ENCODE measurements at regions of chr11 and their contacts with region 1.

Region 1: GRCh38 chr11:62860835-62861563 is 19.7 kb upstream of the SLC3A2 start:
- DNase-seq: no peak
- ATAC-seq: no peak
- H3K4me3 ChIP-seq: peak overlapping the region; percentile 30; the same call in 1 of the 2 replicates
- H3K27ac ChIP-seq: peak overlapping the region; percentile 63; the same call in 2 of the 3 replicates
- H3K4me1 ChIP-seq: peaks cover 22 to 28% of the 10 kb centered on the region in 2 experiments; a peak in 4 of 5 replicates
- H3K27me3 ChIP-seq: no peaks in the 10 kb centered on the region
- CTCF ChIP-seq: no peak
- EP300 ChIP-seq: no peak
- POLR2A ChIP-seq: no peak
- RAD21 ChIP-seq: peak in 1 of 2 experiments; percentile 7; a peak in 1 of 4 replicates

Region 2: GRCh38 chr11:62880803-62881578 is 20.0 kb after region 1 on chr11 and contains the start of gene SLC3A2:
- CTCF ChIA-PET with region 1: no interaction called
- POLR2A ChIA-PET with region 1: interaction called, 180 read pairs
- in situ Hi-C with region 1: no loop called
- intact Hi-C with region 1: loop called (anchors 2 kb)
- DNase-seq: peak; percentile 83 to 95 (median 86)
- ATAC-seq: peak; percentile 88
- H3K4me3 ChIP-seq: peak within 1 kb of the TSS; percentile 56
- H3K27ac ChIP-seq: peak within 1 kb of the TSS; percentile 95
- H3K4me1 ChIP-seq: peaks cover 56 to 58% of the 10 kb centered on the region in 2 experiments
- H3K27me3 ChIP-seq: no peaks in the 10 kb centered on the region
- CTCF ChIP-seq: peak; percentile 72 to 80 (median 77)
- EP300 ChIP-seq: no peak
- POLR2A ChIP-seq: peak; percentile 99
- RAD21 ChIP-seq: peak; percentile 24 to 43; a peak in 2 of 4 replicates
- polyA plus RNA-seq, gene SLC3A2: 20.0 to 39.7 TPM

Region 3: GRCh38 chr11:62974848-62975522 is 114.0 kb after region 1 on chr11:
- CTCF ChIA-PET with region 1: no interaction called
- POLR2A ChIA-PET with region 1: no interaction called
- in situ Hi-C with region 1: no loop called
- intact Hi-C with region 1: no loop called
- DNase-seq: peak; percentile 41 to 54 (median 47)
- ATAC-seq: peak; percentile 92
- H3K4me3 ChIP-seq: no peak overlapping the region
- H3K27ac ChIP-seq: no peak overlapping the region
- H3K4me1 ChIP-seq: peaks cover 0 to 6% of the 10 kb centered on the region in 2 experiments; a peak in 1 of 5 replicates
- H3K27me3 ChIP-seq: peaks cover 5 to 32% of the 10 kb centered on the region in 2 experiments; a peak in 3 of 5 replicates
- CTCF ChIP-seq: peak; percentile 55 to 60 (median 55); a peak in 5 of 6 replicates
- EP300 ChIP-seq: no peak
- POLR2A ChIP-seq: no peak
- RAD21 ChIP-seq: peak; percentile 23 to 26; a peak in 1 of 4 replicates